Activated CD8-positive, alpha-beta memory T cell treated with anti-CD3 and anti-CD28 coated beads, Interleukin-2, amount 10 ng/mL, durations not matched to agents 7 days and 5 days (primary cell): ENCODE measurements at regions of chr11 and their contacts with region 1.

Region 1: DNA sequence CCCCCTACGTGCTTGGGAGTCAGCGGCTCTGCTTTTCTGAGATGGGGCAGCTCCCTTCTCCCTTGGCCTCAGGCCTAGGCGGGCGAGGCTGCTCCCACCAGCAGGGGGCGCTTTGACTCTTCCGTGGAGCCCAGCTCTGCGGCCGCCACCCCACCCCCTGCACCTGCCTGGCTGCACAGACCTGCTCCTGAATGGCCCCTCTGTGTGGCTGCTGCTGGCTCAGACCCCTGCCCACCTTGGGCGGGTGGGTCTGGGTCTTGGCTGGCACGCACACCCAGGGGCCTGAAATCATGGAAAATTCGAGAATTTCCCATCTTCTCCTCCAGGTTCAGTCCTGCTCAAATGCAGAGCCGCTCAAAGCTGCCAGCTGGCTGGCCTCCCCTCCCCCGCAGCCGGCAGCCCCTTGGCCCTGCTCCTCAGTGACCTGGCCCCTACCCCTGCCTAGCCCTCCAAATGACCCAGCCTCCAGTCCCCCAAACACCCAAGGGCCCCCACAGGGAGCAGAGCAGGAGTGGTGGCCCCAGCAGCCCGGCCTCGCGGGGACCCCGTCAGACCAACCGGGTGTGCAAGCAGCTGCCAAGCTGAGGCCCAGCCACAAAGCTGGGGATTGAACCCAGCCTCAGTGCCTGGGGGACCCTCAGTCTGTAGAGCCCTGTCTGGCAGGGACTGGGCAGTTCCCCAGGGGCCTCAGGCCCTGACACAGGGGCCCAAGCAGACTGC is 9.0 kb downstream of the PRR33 start:
- DNase-seq: peak; percentile 77
- ATAC-seq: peak; percentile 91
- H3K4me3 Mint-ChIP-seq: no peak overlapping the region
- H3K27ac Mint-ChIP-seq: no peak overlapping the region
- H3K4me1 Mint-ChIP-seq: peaks cover 5% of the 10 kb centered on the region
- H3K27me3 Mint-ChIP-seq: no peaks in the 10 kb centered on the region

Region 2: DNA sequence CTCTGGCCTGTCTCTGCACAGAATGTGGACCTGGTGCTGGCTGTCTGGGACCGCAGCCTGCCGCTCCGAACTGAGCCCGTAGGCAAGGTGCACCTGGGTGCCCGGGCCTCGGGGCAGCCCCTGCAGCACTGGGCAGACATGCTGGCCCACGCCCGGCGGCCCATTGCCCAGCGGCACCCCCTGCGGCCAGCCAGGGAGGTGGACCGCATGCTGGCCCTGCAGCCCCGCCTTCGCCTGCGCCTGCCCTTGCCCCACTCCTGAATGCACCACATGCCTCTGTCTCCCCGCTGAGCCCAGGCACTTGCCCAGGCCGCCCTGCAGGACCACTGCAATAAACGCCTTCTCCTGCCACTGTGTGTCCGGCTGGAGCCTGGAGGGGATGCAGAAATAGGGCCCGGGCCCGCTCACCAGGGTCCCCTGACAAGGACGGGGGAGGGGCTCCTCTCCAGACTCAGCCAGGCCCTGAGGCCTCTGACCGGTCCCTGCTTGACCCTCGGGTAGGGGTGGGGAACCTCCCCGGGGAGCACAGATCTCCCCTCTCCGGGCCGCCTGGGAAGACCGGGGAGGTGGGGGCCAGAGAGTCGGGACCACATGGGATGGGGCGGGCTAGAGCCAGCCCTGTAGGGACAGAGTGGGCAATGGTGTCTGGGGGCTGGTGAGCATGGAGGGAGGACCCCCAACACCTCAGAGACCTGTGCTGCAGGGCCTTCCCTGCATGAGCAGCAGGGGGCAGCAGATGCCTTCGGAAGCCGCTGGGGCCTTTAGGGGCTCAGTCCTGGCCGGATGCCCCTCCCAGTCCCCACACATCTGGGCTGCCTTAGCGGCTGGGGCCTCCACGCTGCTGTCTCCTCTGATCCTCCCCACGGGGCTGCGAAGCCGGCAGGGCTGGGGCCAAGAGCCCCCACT is 45.3 kb before region 1 on chr11:
- CTCF ChIA-PET with region 1: interaction called, 12 read pairs
- DNase-seq: peak; percentile 92
- ATAC-seq: peak; percentile 91
- H3K4me3 Mint-ChIP-seq: no peak overlapping the region
- H3K27ac Mint-ChIP-seq: no peak overlapping the region
- H3K4me1 Mint-ChIP-seq: peaks cover 8% of the 10 kb centered on the region
- H3K27me3 Mint-ChIP-seq: peaks cover 7% of the 10 kb centered on the region

Region 3: GRCh38 chr11:1852877-1853276 is 29.8 kb before region 1 on chr11 and contains the start of gene LSP1:
- CTCF ChIA-PET with region 1: interaction called, 69 read pairs
- DNase-seq: peak; percentile 95
- ATAC-seq: peak; percentile 59
- H3K4me3 Mint-ChIP-seq: peak within 1 kb of the TSS; percentile 99
- H3K27ac Mint-ChIP-seq: peak within 1 kb of the TSS; percentile 99
- H3K4me1 Mint-ChIP-seq: peaks cover 55% of the 10 kb centered on the region
- H3K27me3 Mint-ChIP-seq: no peaks in the 10 kb centered on the region
- total RNA-seq, gene LSP1: 574 to 702 TPM

Region 4: DNA sequence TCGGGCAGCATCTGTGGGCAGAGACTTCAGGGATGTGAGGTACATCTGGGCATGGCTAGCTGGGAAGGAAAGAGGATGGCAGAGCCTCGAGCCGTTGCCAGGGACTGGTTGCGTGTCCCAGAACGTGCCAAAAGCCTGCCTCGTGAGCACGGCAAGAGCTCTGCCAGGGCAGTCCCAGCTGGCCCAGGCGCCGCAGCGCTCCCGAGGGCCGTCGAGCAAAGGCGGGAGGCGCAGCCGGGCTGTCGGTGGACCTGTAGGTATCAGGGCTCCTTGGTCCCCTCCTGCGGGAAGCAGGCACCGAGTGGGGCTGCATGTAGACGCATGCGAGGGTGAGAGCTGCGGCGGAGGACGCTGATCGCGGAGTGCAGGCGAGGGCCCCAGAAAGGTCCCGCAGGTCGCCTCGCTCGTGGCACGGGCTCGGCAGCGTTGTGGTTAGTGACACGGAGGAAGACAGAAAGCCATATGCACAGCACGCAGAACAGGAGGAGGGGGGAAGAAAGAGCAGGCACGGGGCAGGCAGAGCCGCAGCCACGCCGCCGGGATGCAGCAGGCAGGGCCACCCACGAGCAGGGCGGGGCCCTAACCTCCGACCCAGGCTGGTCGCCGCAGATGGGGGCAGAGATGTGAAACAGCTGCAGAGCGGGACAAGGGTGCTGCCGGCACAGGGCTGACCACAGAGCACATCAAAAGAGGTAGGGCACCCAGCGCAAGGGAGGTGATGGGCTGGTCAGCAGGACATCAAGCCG is 11.8 kb before region 1 on chr11:
- CTCF ChIA-PET with region 1: interaction called, 23 read pairs
- DNase-seq: peak; percentile 71
- ATAC-seq: peak; percentile 68
- H3K4me3 Mint-ChIP-seq: peak overlapping the region; percentile 43
- H3K27ac Mint-ChIP-seq: peak overlapping the region; percentile 76
- H3K4me1 Mint-ChIP-seq: peaks cover 43% of the 10 kb centered on the region
- H3K27me3 Mint-ChIP-seq: no peaks in the 10 kb centered on the region

Region 5: GRCh38 chr11:1917671-1918516 is 35.2 kb after region 1 on chr11:
- CTCF ChIA-PET with region 1: interaction called, 23 read pairs
- DNase-seq: no peak
- ATAC-seq: no peak
- H3K4me3 Mint-ChIP-seq: no peak overlapping the region
- H3K27ac Mint-ChIP-seq: no peak overlapping the region
- H3K4me1 Mint-ChIP-seq: peaks cover 12% of the 10 kb centered on the region
- H3K27me3 Mint-ChIP-seq: peaks cover 4% of the 10 kb centered on the region

Region 6: DNA sequence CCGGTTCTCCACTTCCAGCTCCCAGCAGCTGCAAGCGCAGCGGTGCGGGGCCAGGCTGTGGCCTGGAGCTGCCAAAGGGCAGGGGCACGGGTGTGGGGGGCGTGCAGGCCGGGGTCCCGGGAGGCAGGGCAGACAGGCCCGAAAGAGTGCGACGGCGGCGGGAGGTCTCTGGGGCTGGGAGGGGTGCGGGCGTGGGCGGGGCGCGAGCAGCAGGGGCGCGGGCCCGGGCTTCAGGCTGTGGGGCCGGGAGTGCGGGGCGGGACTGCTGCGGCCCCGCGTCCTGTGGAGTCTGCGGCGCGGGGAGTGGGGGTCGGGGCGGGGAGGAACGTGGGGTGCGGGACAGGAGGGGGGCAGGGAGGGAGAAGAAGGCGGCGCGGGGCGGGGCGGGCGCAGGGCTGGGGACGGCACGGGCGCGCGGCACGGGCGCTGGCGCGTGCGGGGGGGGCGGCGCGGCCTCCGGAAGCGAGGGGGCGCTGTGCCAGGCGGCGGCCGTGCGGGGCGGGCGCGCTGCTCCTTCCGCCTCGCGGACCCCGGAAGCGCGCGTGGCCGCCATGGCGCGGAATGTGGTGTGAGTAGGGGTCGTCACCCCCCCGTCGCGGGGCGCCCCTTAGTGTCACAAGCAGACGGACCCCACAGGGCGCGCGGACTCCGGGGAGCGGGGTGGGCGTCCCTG is 64.3 kb after region 1 on chr11 and contains the start of gene MRPL23:
- CTCF ChIA-PET with region 1: interaction called, 28 read pairs
- DNase-seq: no peak
- ATAC-seq: peak; percentile 81
- H3K4me3 Mint-ChIP-seq: no peak within 1 kb of the TSS
- H3K27ac Mint-ChIP-seq: no peak within 1 kb of the TSS
- H3K4me1 Mint-ChIP-seq: no peaks in the 10 kb centered on the region
- H3K27me3 Mint-ChIP-seq: no peaks in the 10 kb centered on the region
- total RNA-seq, gene MRPL23: 109 to 114 TPM

Region 7: DNA sequence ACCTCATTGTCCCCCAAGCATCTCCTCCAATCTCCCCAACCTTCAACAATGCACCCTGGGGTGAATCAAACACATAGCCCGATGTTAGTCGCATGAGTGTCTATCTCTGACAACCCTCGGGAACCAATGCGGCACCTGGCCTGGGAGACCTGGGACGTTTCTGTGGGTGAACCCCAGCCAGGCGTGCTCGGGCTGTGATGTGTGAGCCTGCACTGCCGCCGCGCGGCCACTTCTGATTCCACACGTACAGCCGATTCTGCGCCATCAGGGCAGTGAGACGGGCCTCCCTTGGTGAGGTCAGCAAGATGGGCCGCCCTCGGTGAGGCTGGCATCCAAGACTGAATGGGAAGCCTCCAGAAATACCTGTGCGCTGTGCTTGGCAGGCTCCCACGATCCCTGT is 120.1 kb after region 1 on chr11:
- CTCF ChIA-PET with region 1: interaction called, 11 read pairs
- DNase-seq: no peak
- ATAC-seq: peak; percentile 74
- H3K4me3 Mint-ChIP-seq: no peak overlapping the region
- H3K27ac Mint-ChIP-seq: no peak overlapping the region
- H3K4me1 Mint-ChIP-seq: no peaks in the 10 kb centered on the region
- H3K27me3 Mint-ChIP-seq: no peaks in the 10 kb centered on the region